ENCODE measurements at regions of chr2 and their contacts with region 1.

Region 1: GRCh38 chr2:26577434-26578112 is 63.6 kb downstream of the CIB4 start:
- DNase-seq: peak; percentile 45 to 65
- ATAC-seq: peak; percentile 48 to 78 (median 70)
- H3K4me3 ChIP-seq: no peak overlapping the region
- H3K27ac ChIP-seq: no peak overlapping the region
- H3K4me1 ChIP-seq: no peaks in the 10 kb centered on the region
- H3K27me3 ChIP-seq: peaks cover 0 to 57% (median 38%) of the 10 kb centered on the region in 7 donors
- CTCF ChIP-seq: peak; percentile 89 to 98 (median 97)

Region 2: DNA sequence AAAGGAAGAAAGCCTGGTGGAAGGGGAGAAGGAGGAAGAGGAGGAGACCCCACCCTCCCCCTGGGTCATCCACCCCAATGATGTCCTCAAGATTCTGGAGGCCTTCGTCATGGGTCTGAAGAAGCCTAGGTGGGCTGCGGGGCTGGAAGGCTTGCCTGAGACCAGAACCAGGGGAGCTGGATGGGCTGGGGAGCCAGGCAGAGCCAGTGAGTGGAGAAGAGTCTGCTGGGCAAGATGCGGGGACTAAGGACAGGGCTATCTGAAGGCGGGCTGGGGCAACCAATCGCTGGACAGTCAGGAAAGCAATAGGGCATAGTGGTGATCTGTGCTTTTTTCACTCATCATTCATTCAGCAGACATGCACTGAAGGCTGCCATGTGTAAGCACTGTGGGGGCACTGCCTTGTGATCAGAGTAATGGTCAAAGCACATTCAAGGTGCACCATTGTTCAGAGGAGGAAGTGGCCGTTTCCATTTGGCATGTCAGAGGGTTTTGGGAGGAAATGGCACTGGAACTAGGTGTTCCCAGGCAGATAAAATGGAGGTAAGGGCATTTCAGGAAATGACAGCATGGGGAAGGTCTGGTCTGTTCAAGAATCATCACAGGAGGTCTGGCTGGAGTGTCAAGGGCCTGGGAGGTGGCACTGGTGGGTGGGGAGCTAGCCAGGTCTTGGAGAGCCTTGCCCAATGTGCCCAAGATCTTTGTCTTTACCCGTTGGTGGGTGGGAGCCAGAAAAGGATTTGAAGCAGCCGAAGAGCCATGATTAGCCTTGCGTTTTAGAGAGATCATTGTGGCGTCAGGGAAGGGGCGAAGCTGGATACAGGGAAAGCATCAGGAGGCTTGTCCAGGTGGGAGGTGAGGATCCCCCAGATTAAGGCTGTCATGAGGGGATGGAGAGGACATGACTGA is 123.9 kb before region 1 on chr2:
- intact Hi-C with region 1: no loop called
- DNase-seq: no peak
- ATAC-seq: no peak
- H3K4me3 ChIP-seq: no peak overlapping the region
- H3K27ac ChIP-seq: no peak overlapping the region
- H3K4me1 ChIP-seq: peaks cover 0 to 20% (median 0%) of the 10 kb centered on the region in 9 donors
- H3K27me3 ChIP-seq: peaks cover 0 to 7% (median 0%) of the 10 kb centered on the region in 7 donors
- CTCF ChIP-seq: no peak

Region 3: GRCh38 chr2:26503231-26503880 is 74.2 kb before region 1 on chr2:
- intact Hi-C with region 1: loop called in 3 of 10 experiments (anchors 1 to 5 kb)
- DNase-seq: peak; percentile 58 to 76
- ATAC-seq: peak; percentile 85 to 94 (median 92)
- H3K4me3 ChIP-seq: peak overlapping the region; percentile 8 to 52 (median 42)
- H3K27ac ChIP-seq: no peak overlapping the region
- H3K4me1 ChIP-seq: peaks cover 0 to 13% (median 10%) of the 10 kb centered on the region in 9 donors
- H3K27me3 ChIP-seq: peaks cover 0 to 36% (median 12%) of the 10 kb centered on the region in 7 donors
- CTCF ChIP-seq: peak; percentile 51 to 95 (median 82)